ENCODE measurements at regions of chr1 and their contacts with region 1.

Region 1: GRCh38 chr1:83931658-83932253 is 67.2 kb downstream of the TTLL7 start:
- DNase-seq: no peak
- H3K4me3 ChIP-seq: no peak overlapping the region
- H3K27ac ChIP-seq: no peak overlapping the region
- H3K4me1 ChIP-seq: peaks cover 0 to 7% of the 10 kb centered on the region in 2 donors
- H3K27me3 ChIP-seq: no peaks in the 10 kb centered on the region
- CTCF ChIP-seq: peak; percentile 58 to 79 (median 67)

Region 2: DNA sequence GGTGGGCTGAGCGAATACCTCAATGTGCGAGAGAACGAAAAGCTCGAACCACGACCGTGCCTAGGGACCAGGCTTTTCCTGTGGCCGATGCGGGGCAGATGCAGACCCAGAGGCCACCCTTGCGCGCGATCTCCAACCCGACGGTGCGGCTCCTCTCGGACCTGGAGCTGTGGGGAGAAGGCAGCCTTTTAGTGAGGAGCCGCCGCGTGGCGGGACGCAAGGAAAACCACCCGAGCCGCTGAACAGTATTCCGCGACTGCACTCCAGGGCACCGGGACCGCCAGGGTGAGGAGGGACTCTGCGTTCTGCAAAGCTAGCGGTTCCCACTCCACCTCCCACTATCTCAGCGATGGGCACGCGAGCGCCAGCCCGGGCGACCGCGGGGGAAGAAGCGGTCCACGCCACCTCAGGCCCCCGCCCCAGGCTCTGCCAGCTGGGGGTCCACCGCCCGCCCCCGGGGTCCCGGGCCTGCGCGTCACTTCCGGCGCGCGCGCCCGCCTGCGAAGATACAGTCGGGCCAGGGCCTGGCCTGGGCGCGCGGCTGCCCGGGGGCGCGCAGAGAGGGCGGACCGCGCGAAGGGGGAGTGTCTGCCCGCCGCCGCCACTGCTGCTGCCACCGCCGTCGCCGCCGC is 145.8 kb after region 1 on chr1:
- intact Hi-C with region 1: loop called (anchors 5 kb)
- DNase-seq: peak; percentile 12 to 86
- H3K4me3 ChIP-seq: peak overlapping the region; percentile 90 to 96
- H3K27ac ChIP-seq: peak overlapping the region; percentile 90 to 95
- H3K4me1 ChIP-seq: peaks cover 0 to 6% of the 10 kb centered on the region in 2 donors
- H3K27me3 ChIP-seq: no peaks in the 10 kb centered on the region
- CTCF ChIP-seq: peak in 1 of 3 experiments; percentile 19

Region 3: GRCh38 chr1:84122780-84123382 is 191.1 kb after region 1 on chr1:
- intact Hi-C with region 1: loop called (anchors 1 kb)
- DNase-seq: peak in 1 of 2 donors; percentile 69
- H3K4me3 ChIP-seq: no peak overlapping the region
- H3K27ac ChIP-seq: no peak overlapping the region
- H3K4me1 ChIP-seq: no peaks in the 10 kb centered on the region
- H3K27me3 ChIP-seq: no peaks in the 10 kb centered on the region
- CTCF ChIP-seq: peak; percentile 42 to 71 (median 63)

Region 4: GRCh38 chr1:84433258-84434080 is 501.7 kb after region 1 on chr1:
- intact Hi-C with region 1: loop called (anchors 10 kb)
- DNase-seq: peak in 1 of 2 donors; percentile 69
- H3K4me3 ChIP-seq: peak overlapping the region; percentile 29 to 40
- H3K27ac ChIP-seq: no peak overlapping the region
- H3K4me1 ChIP-seq: no peaks in the 10 kb centered on the region
- H3K27me3 ChIP-seq: no peaks in the 10 kb centered on the region
- CTCF ChIP-seq: peak; percentile 42 to 76 (median 65)

Measured in ascending aorta (tissue), 2 donors.